ENCODE measurements at regions of chr21 and their contacts with region 1.

Region 1: GRCh38 chr21:42012344-42012743 is 2.2 kb upstream of the ZBTB21 start:
- DNase-seq: no peak
- H3K4me3 ChIP-seq: no peak overlapping the region
- H3K27ac ChIP-seq: no peak overlapping the region
- H3K4me1 ChIP-seq: peaks cover 0 to 9% of the 10 kb centered on the region in 2 experiments; a peak in 2 of 4 replicates
- H3K27me3 ChIP-seq: no peaks in the 10 kb centered on the region; the same call in 1 of the 2 replicates
- CTCF ChIP-seq: no peak
- EP300 ChIP-seq: no peak
- RAD21 ChIP-seq: no peak

Region 2: DNA sequence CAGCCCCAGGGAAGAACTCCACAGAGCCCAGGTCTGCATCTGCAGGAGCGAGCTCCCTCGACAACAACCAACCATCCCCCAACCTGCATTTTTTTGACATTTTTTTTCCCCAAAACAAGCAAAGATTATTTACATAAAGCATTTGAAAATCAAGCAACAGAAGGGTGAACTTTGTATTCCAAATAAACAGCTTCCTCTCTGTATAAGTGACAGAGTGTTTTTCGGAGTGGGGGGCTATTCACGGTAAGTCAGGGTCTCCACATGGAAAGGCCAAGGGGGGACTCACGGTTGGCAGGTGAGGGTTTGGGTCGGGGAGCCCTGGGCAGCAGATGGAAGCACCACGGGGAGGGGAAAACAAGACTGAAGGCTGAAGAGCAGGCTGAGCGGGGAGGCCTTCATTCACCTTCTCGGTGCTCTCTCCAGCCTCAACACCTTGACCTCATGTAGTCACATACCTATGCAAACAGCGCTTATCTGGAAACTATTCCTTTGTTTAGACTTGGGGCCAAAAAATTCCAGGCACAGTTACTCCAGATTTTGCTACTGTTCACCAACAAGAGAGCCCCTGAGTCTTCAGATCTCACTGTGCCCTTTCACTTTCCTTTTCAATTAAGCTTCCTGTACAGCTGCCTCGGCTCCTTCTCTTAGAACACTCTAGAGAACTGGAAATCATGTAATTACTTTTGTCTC is 86.1 kb before region 1 on chr21:
- CTCF ChIA-PET with region 1: no interaction called
- POLR2A ChIA-PET with region 1: no interaction called
- DNase-seq: no peak
- H3K4me3 ChIP-seq: no peak overlapping the region
- H3K27ac ChIP-seq: no peak overlapping the region
- H3K4me1 ChIP-seq: peaks cover 0 to 7% of the 10 kb centered on the region in 2 experiments; a peak in 2 of 4 replicates
- H3K27me3 ChIP-seq: no peaks in the 10 kb centered on the region
- CTCF ChIP-seq: no peak
- EP300 ChIP-seq: no peak
- RAD21 ChIP-seq: no peak

Region 3: DNA sequence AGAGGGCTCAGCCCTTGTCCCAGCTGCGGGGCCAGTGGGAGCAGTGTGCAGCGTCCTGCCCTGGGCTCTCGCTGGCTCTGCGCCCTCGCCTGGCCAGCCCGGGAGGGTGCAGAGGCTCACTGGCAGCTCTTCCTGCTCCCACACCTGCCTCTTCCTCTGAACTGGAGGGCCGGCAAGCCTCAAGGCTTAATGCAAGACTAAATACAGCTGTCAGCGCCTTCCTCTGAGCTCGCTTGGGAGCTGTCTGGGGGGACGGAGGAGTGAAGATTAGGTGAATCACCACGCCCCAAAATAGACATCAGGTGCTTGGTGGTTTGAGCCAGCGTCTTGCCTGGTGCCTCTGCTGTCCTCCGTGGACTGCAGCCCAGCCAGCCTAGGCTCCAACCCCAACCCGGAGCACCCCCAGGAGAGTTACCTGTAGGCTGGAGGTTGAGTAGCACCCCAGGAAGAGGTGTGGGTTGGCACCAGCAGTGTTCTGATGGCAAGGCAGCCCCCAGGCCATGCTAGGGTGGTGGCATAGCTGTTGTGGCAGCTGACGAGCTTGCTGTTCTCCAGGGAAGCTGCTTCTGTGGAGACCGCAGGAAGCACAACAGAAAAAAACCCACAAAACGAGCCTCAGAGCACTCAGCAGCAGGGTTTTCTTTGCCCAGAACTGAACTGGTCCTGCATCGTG is 95.7 kb after region 1 on chr21:
- CTCF ChIA-PET with region 1: interaction called, 12 read pairs
- POLR2A ChIA-PET with region 1: no interaction called
- DNase-seq: peak; percentile 88
- H3K4me3 ChIP-seq: peak overlapping the region in 1 of 2 experiments; percentile 16; a peak in 1 of 4 replicates
- H3K27ac ChIP-seq: no peak overlapping the region
- H3K4me1 ChIP-seq: peaks cover 0 to 5% of the 10 kb centered on the region in 2 experiments; a peak in 1 of 4 replicates
- H3K27me3 ChIP-seq: no peaks in the 10 kb centered on the region
- CTCF ChIP-seq: peak; percentile 71
- EP300 ChIP-seq: no peak
- RAD21 ChIP-seq: peak; percentile 61